ENCODE measurements at regions of chr14 and their contacts with region 1.

Region 1: GRCh38 chr14:75002392-75003249 is at the start of gene EIF2B2:
- DNase-seq: peak; percentile 99
- ATAC-seq: peak; percentile 97
- H3K4me3 Mint-ChIP-seq: peak within 1 kb of the TSS; percentile 87
- H3K27ac Mint-ChIP-seq: peak within 1 kb of the TSS; percentile 88
- H3K4me1 Mint-ChIP-seq: peaks cover 34% of the 10 kb centered on the region
- H3K27me3 Mint-ChIP-seq: no peaks in the 10 kb centered on the region
- total RNA-seq, gene EIF2B2: 55.6 to 69.8 TPM

Region 2: GRCh38 chr14:74712499-74713394 is 289.9 kb before region 1 on chr14 and contains the starts of genes AREL1 and FCF1:
- CTCF ChIA-PET with region 1: no interaction called
- POLR2A ChIA-PET with region 1: no interaction called
- intact Hi-C with region 1: loop called in 1 of 2 experiments (anchors 1 kb)
- DNase-seq: peak; percentile 88
- ATAC-seq: peak; percentile 98
- H3K4me3 Mint-ChIP-seq: peak within 1 kb of the TSS; percentile 98
- H3K27ac Mint-ChIP-seq: peak within 1 kb of the TSS; percentile 98
- H3K4me1 Mint-ChIP-seq: peaks cover 50% of the 10 kb centered on the region
- H3K27me3 Mint-ChIP-seq: no peaks in the 10 kb centered on the region
- total RNA-seq, gene AREL1: 31.3 to 35.6 TPM
- total RNA-seq, gene FCF1: 87.7 to 112 TPM

Region 3: GRCh38 chr14:74881431-74882361 is 120.9 kb before region 1 on chr14 and contains the start of gene DLST:
- CTCF ChIA-PET with region 1: no interaction called
- POLR2A ChIA-PET with region 1: no interaction called
- intact Hi-C with region 1: loop called in 1 of 2 experiments (anchors 1 kb)
- DNase-seq: peak; percentile 92
- ATAC-seq: peak; percentile 89
- H3K4me3 Mint-ChIP-seq: peak within 1 kb of the TSS; percentile 99
- H3K27ac Mint-ChIP-seq: peak within 1 kb of the TSS; percentile 96
- H3K4me1 Mint-ChIP-seq: peaks cover 64% of the 10 kb centered on the region
- H3K27me3 Mint-ChIP-seq: no peaks in the 10 kb centered on the region
- total RNA-seq, gene DLST: 103 to 120 TPM

Region 4: GRCh38 chr14:75050852-75051554 is 48.4 kb after region 1 on chr14 and contains the start of gene MLH3:
- CTCF ChIA-PET with region 1: interaction called, 4 read pairs
- POLR2A ChIA-PET with region 1: interaction called, 4 read pairs
- intact Hi-C with region 1: loop called (anchors 2 kb)
- DNase-seq: peak; percentile 87
- ATAC-seq: peak; percentile 66
- H3K4me3 Mint-ChIP-seq: peak within 1 kb of the TSS; percentile 88
- H3K27ac Mint-ChIP-seq: peak within 1 kb of the TSS; percentile 94
- H3K4me1 Mint-ChIP-seq: peaks cover 72% of the 10 kb centered on the region
- H3K27me3 Mint-ChIP-seq: no peaks in the 10 kb centered on the region
- total RNA-seq, gene MLH3: 28.1 to 30.8 TPM

Region 5: GRCh38 chr14:75069045-75069810 is 66.6 kb after region 1 on chr14 and contains the start of gene ZC2HC1C:
- CTCF ChIA-PET with region 1: no interaction called
- POLR2A ChIA-PET with region 1: no interaction called
- intact Hi-C with region 1: loop called (anchors 1 to 5 kb)
- DNase-seq: peak; percentile 79
- ATAC-seq: peak; percentile 93
- H3K4me3 Mint-ChIP-seq: no peak within 1 kb of the TSS
- H3K27ac Mint-ChIP-seq: peak within 1 kb of the TSS; percentile 82
- H3K4me1 Mint-ChIP-seq: peaks cover 9% of the 10 kb centered on the region
- H3K27me3 Mint-ChIP-seq: no peaks in the 10 kb centered on the region
- total RNA-seq, gene ZC2HC1C: 1.2 to 1.3 TPM

Region 6: DNA sequence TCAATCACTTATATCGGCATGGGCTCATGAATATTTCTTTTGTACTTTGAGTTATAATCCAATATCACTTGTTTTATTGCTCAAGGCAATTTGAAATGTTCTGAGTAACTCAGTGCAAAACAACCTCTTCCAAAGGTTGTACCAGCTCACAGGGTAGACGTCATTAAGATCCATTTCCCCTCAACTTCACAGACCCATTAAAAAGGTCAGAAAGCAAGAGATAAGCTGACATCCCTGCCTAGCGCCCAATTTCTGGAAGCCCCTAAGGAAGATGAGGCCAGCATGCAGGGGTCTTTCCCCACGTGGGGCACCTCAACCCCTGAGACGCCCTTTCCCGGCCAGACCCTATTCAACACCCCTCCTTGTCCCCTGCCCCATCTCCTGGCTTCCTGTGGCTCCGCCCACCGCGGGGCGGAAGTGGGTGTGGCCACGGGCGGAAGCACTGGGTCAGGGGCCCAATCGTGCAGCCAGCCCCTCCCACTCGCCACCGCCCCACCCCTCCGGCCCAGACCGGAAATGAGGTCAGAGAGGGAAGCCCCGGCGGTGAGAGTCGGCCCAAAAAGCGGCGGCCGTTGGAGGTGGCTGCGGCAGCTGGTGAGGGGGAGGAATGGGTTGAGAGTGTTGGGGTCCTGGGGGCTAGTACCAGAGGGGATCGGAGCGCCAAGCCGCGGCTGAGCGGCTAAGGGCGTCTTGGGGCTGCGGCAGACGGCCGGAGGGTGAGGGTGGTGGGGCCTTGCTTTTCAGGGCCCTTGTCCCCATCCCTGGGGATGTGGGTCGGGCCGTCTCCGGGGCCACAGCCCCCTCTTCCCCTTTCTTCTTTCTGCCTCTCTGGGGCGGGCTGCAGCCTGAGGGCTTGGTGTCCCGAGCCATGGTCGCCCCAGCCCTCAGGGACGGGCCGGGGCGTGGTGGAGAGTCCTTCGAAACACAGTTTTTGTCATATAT is 1149.0 kb after region 1 on chr14 and contains the start of gene GPATCH2L:
- CTCF ChIA-PET with region 1: no interaction called
- POLR2A ChIA-PET with region 1: no interaction called
- intact Hi-C with region 1: loop called in 1 of 2 experiments (anchors 5 kb)
- DNase-seq: peak; percentile 98
- ATAC-seq: peak; percentile 92
- H3K4me3 Mint-ChIP-seq: peak within 1 kb of the TSS; percentile 92
- H3K27ac Mint-ChIP-seq: peak within 1 kb of the TSS; percentile 95
- H3K4me1 Mint-ChIP-seq: peaks cover 46% of the 10 kb centered on the region
- H3K27me3 Mint-ChIP-seq: no peaks in the 10 kb centered on the region
- total RNA-seq, gene GPATCH2L: 43.0 to 47.2 TPM

Measured in activated CD4-positive, alpha-beta T cell treated with anti-CD3 and anti-CD28 coated beads for 36 hours (primary cell).